Testis (tissue), 5 donors: ENCODE measurements at regions of chr2 and their contacts with region 1.

Region 1: GRCh38 chr2:172931918-172932520 is 143.6 kb upstream of the MAP3K20 start:
- DNase-seq: peak; percentile 86
- H3K4me3 ChIP-seq: no peak overlapping the region
- H3K27ac ChIP-seq: peak overlapping the region; percentile 31 to 46
- H3K4me1 ChIP-seq: peaks cover 43% of the 10 kb centered on the region
- H3K27me3 ChIP-seq: no peaks in the 10 kb centered on the region
- CTCF ChIP-seq: peak; percentile 60 to 76 (median 73)
- POLR2A ChIP-seq: no peak

Region 2: DNA sequence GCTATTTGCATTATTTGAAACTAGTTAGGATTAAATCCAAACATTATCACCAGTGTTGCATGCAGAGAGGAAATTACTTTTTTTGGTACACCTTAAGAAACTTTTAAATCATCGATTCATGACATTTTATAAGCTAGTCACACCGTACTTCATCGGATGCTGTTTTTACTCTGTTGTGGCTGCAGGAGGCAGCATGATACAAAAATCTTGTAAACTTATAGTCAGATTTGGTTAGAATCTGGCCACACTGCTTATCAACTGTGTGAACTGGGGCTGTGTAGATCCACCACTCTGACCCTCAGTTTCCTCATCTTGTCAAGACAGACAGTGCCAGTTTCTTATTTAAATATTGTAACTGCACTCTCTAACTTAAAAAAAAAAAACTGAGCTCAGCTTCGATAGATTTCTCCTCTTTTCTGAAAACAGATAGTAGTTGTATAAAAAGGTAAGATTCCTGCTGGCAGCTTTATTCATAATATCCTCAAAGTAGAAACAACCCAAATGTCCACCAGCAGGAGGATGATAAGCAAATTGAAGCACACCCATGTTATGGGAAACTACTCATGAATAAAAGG is 118.6 kb before region 1 on chr2:
- intact Hi-C with region 1: loop called (anchors 10 kb)
- DNase-seq: no peak
- H3K4me3 ChIP-seq: no peak overlapping the region
- H3K27ac ChIP-seq: no peak overlapping the region
- H3K4me1 ChIP-seq: no peaks in the 10 kb centered on the region
- H3K27me3 ChIP-seq: no peaks in the 10 kb centered on the region
- CTCF ChIP-seq: peak; percentile 10 to 29 (median 19)
- POLR2A ChIP-seq: no peak

Region 3: GRCh38 chr2:172864182-172864581 is 67.8 kb before region 1 on chr2:
- intact Hi-C with region 1: loop called (anchors 10 kb)
- DNase-seq: peak; percentile 79
- H3K4me3 ChIP-seq: no peak overlapping the region
- H3K27ac ChIP-seq: no peak overlapping the region
- H3K4me1 ChIP-seq: no peaks in the 10 kb centered on the region
- H3K27me3 ChIP-seq: no peaks in the 10 kb centered on the region
- CTCF ChIP-seq: peak; percentile 48 to 67 (median 65)
- POLR2A ChIP-seq: no peak